Dendritic cell treated with granulocyte-macrophage colony-stimulating factor and Interleukin-4, amounts not matched to agents 40 ng/mL and 50 ng/mL, for 4 days (primary cell): ENCODE measurements at regions of chr7 and their contacts with region 1.

Region 1: GRCh38 chr7:91264046-91264923 is at the start of gene FZD1:
- H3K4me3 Mint-ChIP-seq: peak within 1 kb of the TSS; percentile 93
- H3K27ac Mint-ChIP-seq: peak within 1 kb of the TSS; percentile 92
- H3K4me1 Mint-ChIP-seq: peaks cover 43% of the 10 kb centered on the region
- H3K27me3 Mint-ChIP-seq: peaks cover 20% of the 10 kb centered on the region

Region 2: GRCh38 chr7:90595801-90596671 is 668.2 kb before region 1 on chr7 and contains the start of gene CDK14:
- intact Hi-C with region 1: loop called (anchors 5 kb)
- H3K4me3 Mint-ChIP-seq: peak within 1 kb of the TSS; percentile 93
- H3K27ac Mint-ChIP-seq: peak within 1 kb of the TSS; percentile 94
- H3K4me1 Mint-ChIP-seq: peaks cover 38% of the 10 kb centered on the region
- H3K27me3 Mint-ChIP-seq: peaks cover 19% of the 10 kb centered on the region

Region 3: DNA sequence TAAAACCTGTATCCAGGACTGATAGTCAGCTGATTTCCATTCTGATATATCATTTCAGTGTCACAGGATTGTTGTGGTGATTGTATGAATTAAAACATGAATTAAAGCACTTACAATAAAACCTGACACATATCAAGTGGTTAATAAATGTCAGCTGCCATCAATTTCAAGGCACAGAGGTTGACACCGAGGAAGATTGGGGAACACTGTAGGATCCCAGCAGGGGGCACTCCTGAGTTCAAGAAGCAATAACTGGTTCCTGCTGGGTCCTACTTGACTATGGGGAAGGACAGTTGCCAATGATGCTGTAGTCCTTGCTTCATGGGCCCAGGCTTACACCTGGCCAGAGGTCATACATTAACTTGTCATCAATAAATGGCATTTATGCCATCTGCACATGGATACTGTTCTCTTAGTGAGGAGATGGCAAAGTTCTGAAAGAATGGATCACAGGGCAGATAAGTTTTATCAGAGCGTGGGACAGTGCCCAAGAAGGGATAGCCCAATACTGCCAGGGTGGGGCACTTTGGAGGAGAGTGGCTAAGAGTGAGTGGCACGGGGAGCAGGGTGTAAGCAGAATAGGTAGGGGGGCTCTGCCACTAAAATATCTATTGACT is 24.0 kb after region 1 on chr7:
- intact Hi-C with region 1: loop called (anchors 2 kb)
- H3K4me3 Mint-ChIP-seq: no peak overlapping the region
- H3K27ac Mint-ChIP-seq: no peak overlapping the region
- H3K4me1 Mint-ChIP-seq: peaks cover 47% of the 10 kb centered on the region
- H3K27me3 Mint-ChIP-seq: no peaks in the 10 kb centered on the region

Region 4: GRCh38 chr7:91325726-91326125 is 61.4 kb after region 1 on chr7:
- intact Hi-C with region 1: loop called (anchors 5 kb)
- H3K4me3 Mint-ChIP-seq: no peak overlapping the region
- H3K27ac Mint-ChIP-seq: peak overlapping the region; percentile 84
- H3K4me1 Mint-ChIP-seq: peaks cover 49% of the 10 kb centered on the region
- H3K27me3 Mint-ChIP-seq: no peaks in the 10 kb centered on the region

Region 5: DNA sequence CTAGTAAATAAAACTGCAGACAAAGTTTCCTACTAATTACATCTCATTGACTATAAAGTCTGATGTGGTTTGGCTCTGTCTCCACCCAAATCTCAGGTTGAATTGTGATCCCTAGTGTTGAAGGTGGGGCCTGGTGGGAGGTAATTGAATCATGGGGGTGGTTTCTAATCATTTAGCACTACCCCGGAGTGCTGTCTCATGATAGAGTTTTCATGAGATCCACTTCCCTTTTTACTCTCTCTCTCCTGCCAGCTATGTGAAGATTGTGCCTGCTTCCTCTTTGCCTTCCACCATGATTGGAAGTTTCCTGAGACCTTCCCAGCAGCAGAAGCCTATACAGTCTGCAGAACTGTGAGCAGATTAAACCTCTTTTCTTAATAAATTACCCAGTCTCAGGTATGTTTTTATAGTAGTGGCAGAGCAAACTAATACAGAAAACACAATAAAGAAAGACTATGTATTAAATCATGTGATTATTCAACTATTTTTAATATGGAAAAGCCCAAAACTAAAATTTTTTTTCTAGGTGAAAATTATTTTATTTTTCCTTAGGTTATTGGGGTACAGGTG is 232.1 kb after region 1 on chr7:
- intact Hi-C with region 1: no loop called
- H3K4me3 Mint-ChIP-seq: no peak overlapping the region
- H3K27ac Mint-ChIP-seq: no peak overlapping the region
- H3K4me1 Mint-ChIP-seq: no peaks in the 10 kb centered on the region
- H3K27me3 Mint-ChIP-seq: no peaks in the 10 kb centered on the region